ENCODE measurements at regions of chr12 and their contacts with region 1.

Region 1: GRCh38 chr12:112924986-112925385 is 13.3 kb upstream of the OAS3 start:
- DNase-seq: no peak
- H3K4me3 Mint-ChIP-seq: peak overlapping the region; percentile 21
- H3K27ac Mint-ChIP-seq: peak overlapping the region; percentile 62
- H3K4me1 Mint-ChIP-seq: peaks cover 33% of the 10 kb centered on the region
- H3K27me3 Mint-ChIP-seq: no peaks in the 10 kb centered on the region
- CTCF ChIP-seq: no peak

Region 2: DNA sequence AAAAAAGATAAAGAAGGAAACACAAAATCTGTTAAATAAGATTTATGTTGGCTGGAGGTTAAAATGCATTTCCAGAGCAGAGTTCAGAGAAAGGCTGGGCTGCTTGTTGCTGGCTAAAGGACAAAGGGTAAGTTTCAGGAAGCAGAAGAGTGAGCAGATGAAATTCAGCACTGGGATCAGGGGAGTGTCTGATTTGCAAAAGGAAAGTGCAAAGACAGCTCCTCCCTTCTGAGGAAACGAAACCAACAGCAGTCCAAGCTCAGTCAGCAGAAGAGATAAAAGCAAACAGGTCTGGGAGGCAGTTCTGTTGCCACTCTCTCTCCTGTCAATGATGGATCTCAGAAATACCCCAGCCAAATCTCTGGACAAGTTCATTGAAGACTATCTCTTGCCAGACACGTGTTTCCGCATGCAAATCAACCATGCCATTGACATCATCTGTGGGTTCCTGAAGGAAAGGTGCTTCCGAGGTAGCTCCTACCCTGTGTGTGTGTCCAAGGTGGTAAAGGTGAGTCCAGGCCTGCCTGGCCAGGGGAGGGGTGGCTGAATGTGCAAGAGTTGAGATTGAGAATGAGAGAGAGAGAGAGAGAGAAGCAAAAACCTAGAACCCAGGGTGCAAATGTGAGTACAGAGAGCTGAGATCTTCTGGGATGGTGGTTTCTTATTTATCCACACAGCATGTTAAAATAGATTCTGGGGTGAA is 18.1 kb before region 1 on chr12 and contains the start of gene OAS1:
- CTCF ChIA-PET with region 1: interaction called, 3 read pairs
- intact Hi-C with region 1: loop called (anchors 2 kb)
- DNase-seq: peak; percentile 67
- H3K4me3 Mint-ChIP-seq: peak within 1 kb of the TSS; percentile 74
- H3K27ac Mint-ChIP-seq: peak within 1 kb of the TSS; percentile 17
- H3K4me1 Mint-ChIP-seq: peaks cover 48% of the 10 kb centered on the region
- H3K27me3 Mint-ChIP-seq: no peaks in the 10 kb centered on the region
- CTCF ChIP-seq: no peak
- total RNA-seq, gene OAS1: 170 and 429 TPM in 2 replicates

Region 3: GRCh38 chr12:113162102-113163029 is 237.4 kb after region 1 on chr12:
- CTCF ChIA-PET with region 1: interaction called, 16 read pairs
- intact Hi-C with region 1: no loop called
- DNase-seq: no peak
- H3K4me3 Mint-ChIP-seq: no peak overlapping the region
- H3K27ac Mint-ChIP-seq: no peak overlapping the region
- H3K4me1 Mint-ChIP-seq: no peaks in the 10 kb centered on the region
- H3K27me3 Mint-ChIP-seq: no peaks in the 10 kb centered on the region
- CTCF ChIP-seq: no peak